CD14-positive monocyte (primary cell): ENCODE measurements at regions of chr17 and their contacts with region 1.

Region 1: DNA sequence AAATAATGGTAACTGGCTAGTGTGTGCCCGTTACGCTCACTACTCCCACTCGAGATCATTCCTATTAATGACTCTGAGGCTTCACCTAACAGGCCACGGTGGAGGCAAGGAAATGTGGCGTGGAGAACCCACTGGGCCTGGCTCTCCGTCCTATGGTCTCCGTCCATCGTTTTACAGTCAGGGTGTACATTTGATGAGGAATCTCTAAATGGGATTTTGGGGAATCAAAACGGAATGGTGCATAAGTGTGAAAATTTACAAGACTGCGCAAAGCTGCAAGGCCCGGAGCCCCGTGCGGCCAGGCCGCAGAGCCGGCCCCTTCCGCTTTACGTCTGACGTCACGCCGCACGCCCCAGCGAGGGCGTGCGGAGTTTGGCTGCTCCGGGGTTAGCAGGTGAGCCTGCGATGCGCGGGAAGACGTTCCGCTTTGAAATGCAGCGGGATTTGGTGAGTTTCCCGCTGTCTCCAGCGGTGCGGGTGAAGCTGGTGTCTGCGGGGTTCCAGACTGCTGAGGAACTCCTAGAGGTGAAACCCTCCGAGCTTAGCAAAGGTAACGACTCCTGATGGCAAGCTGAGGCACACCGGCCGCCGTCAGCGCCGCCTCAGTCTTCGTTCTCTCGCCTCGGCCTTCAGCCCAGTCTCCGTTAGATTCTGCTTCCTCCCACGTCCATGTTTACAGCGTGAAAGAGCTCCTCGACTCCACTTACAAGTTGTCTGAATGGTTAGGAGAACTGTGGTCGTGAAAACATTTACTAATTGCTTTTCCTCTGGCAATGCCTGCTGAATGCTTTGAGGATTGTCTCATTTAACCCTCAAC is at the start of gene RAD51C:
- DNase-seq: peak; percentile 83 to 84 (median 83)
- H3K4me3 ChIP-seq: peak within 1 kb of the TSS; percentile 54 to 88 (median 55)
- H3K4me3 Mint-ChIP-seq: peak within 1 kb of the TSS; percentile 88 to 93
- H3K27ac ChIP-seq: peak within 1 kb of the TSS; percentile 61 to 85
- H3K27ac Mint-ChIP-seq: peak within 1 kb of the TSS; percentile 81 to 94 (median 93)
- H3K4me1 ChIP-seq: peaks cover 12 to 19% of the 10 kb centered on the region in 2 donors
- H3K4me1 Mint-ChIP-seq: peaks cover 16% of the 10 kb centered on the region
- H3K27me3 ChIP-seq: no peaks in the 10 kb centered on the region
- H3K27me3 Mint-ChIP-seq: peaks cover 0 to 3% (median 2%) of the 10 kb centered on the region in 3 donors
- CTCF ChIP-seq: no peak
- polyA plus RNA-seq, gene RAD51C: 6.8 to 14.5 (median 13.1) TPM

Region 2: GRCh38 chr17:58643140-58643539 is 49.3 kb before region 1 on chr17:
- intact Hi-C with region 1: loop called in 1 of 2 experiments (anchors 10 kb)
- DNase-seq: no peak
- H3K4me3 ChIP-seq: no peak overlapping the region
- H3K4me3 Mint-ChIP-seq: no peak overlapping the region
- H3K27ac ChIP-seq: no peak overlapping the region
- H3K27ac Mint-ChIP-seq: no peak overlapping the region
- H3K4me1 ChIP-seq: no peaks in the 10 kb centered on the region
- H3K4me1 Mint-ChIP-seq: no peaks in the 10 kb centered on the region
- H3K27me3 ChIP-seq: no peaks in the 10 kb centered on the region
- H3K27me3 Mint-ChIP-seq: peaks cover 0 to 3% (median 2%) of the 10 kb centered on the region in 3 donors
- CTCF ChIP-seq: no peak